ENCODE measurements at regions of chr17 and their contacts with region 1.

Region 1: GRCh38 chr17:31388770-31389661 is 2.5 kb upstream of the RAB11FIP4 start:
- DNase-seq: peak; percentile 83
- H3K4me3 ChIP-seq: no peak overlapping the region; a peak in 1 of 4 replicates
- H3K27ac ChIP-seq: no peak overlapping the region
- H3K4me1 ChIP-seq: peaks cover 0 to 29% of the 10 kb centered on the region in 2 experiments; a peak in 2 of 4 replicates
- H3K27me3 ChIP-seq: no peaks in the 10 kb centered on the region
- CTCF ChIP-seq: peak; percentile 74
- EP300 ChIP-seq: no peak
- RAD21 ChIP-seq: peak; percentile 77

Region 2: DNA sequence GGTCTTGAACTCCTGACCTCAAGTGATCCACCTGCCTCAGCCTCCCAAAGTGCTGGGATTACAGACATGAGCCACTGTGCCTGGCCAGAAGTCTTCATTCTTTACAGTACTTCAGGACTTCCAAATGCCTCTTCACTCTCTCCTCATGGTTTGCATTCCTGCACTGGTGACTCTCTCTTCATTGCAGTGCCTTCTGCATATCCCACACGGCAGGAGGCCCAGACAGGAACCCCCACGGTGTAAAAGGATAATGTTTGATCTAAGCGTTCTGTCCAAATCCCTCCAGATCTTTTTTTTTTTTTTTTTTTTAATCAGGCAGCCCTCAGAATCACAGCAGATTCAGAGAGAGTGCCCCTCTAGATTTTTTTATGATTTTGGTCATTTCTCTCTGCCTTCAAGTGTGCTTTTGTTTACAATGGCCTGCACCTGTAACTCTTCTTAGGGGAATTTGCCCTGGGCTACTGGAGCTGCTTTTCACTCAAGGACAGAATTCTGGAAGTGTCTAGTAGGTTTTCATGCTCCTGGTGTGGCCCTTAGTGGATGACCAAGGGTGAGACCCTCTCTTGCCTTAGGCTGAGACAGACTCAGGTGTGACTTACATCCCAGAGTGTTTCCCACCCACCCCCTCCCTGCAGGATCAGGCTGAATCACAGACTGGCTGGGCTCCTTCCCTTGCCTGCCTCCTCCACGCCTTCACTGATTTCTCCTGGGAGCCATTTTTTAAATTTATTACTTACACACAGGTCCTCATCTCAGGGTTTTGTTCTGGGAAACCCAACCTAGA is 314.1 kb before region 1 on chr17:
- CTCF ChIA-PET with region 1: no interaction called
- POLR2A ChIA-PET with region 1: no interaction called
- DNase-seq: no peak
- H3K4me3 ChIP-seq: no peak overlapping the region
- H3K27ac ChIP-seq: no peak overlapping the region
- H3K4me1 ChIP-seq: no peaks in the 10 kb centered on the region
- H3K27me3 ChIP-seq: no peaks in the 10 kb centered on the region
- CTCF ChIP-seq: no peak
- EP300 ChIP-seq: no peak
- RAD21 ChIP-seq: no peak

Region 3: GRCh38 chr17:31294820-31295488 is 94.1 kb before region 1 on chr17:
- CTCF ChIA-PET with region 1: no interaction called
- POLR2A ChIA-PET with region 1: no interaction called
- DNase-seq: no peak
- H3K4me3 ChIP-seq: no peak overlapping the region
- H3K27ac ChIP-seq: no peak overlapping the region
- H3K4me1 ChIP-seq: no peaks in the 10 kb centered on the region; a peak in 1 of 4 replicates
- H3K27me3 ChIP-seq: no peaks in the 10 kb centered on the region
- CTCF ChIP-seq: no peak
- EP300 ChIP-seq: no peak
- RAD21 ChIP-seq: no peak

Region 4: DNA sequence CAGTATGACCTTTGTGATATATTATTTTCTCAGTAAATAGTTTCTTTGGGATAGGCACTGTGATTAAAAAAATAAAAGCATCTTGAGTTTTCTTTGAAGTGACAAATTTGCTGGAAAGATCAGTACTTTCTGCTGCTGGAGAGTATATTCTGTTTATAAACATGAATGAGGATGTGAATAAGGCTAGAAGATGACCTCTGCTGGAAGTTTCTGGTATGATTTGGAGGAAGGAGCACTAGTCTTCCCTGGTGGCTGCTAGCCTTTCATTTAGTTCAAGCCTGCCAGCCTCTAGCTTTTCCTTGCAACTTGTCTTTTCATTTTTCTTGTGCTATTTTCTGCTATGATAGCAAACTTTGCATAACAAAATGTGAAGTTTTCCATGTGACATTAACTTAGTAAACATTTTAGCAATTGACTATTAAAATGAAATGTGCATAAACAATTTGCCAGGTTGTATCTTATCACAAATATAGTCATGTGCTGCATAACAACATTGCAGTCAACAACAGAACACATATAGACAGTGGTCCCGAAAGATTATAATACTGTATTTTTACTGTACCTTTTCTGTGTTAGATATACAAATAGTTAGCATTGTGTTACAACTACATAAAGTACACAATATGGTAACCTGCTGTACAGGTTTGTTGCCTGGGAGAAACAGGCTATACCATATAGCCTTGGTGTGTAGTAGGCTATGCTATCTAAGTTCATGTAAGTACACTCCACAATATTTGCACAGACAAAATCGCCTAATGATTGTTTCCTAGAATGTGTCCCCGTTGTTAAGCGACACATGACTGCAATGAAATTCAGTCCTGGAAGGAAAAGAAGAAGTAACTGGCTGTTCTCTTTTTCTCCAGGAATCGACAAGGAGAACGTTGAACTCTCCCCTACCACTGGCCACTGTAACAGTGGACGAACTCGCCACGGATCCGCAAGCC is 15.6 kb before region 1 on chr17:
- CTCF ChIA-PET with region 1: interaction called, 26 read pairs
- POLR2A ChIA-PET with region 1: no interaction called
- DNase-seq: no peak
- H3K4me3 ChIP-seq: no peak overlapping the region
- H3K27ac ChIP-seq: 0 out of 4 replicates have a peak overlapping the region, but pooled peaks of 1 of the 2 experiments have one; percentile 18
- H3K4me1 ChIP-seq: peaks cover 3 to 9% of the 10 kb centered on the region in 2 experiments; a peak in 2 of 4 replicates
- H3K27me3 ChIP-seq: no peaks in the 10 kb centered on the region
- CTCF ChIP-seq: peak; percentile 70
- EP300 ChIP-seq: no peak
- RAD21 ChIP-seq: peak; percentile 75

Region 5: DNA sequence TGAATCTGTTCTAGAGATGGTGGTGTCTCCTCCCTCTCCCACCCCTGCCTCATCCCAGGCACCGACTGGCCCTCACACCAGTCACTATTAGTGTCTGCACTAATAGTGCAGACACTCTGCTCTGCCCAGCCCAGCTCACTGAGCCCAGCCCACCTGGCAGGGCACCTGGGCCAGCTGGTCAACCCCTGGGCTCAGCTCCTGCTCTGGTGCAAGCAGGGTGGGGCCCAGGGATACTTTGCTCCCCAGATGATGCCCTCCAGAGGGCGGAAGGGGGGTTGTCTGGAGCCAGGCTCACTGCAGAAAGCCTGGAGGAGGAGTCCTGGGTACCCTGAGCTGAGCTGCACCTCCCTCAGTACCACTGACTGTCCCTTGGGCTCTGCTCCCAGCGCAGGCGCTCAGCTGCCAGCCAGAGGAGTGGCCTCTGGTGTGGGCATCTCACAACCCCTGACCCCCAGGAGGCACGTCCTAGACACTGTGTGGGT is 16.9 kb after region 1 on chr17:
- CTCF ChIA-PET with region 1: interaction called, 18 read pairs
- POLR2A ChIA-PET with region 1: interaction called, 4 read pairs
- DNase-seq: peak; percentile 76
- H3K4me3 ChIP-seq: no peak overlapping the region
- H3K27ac ChIP-seq: peak overlapping the region in 1 of 2 experiments; percentile 92; a peak in 2 of 4 replicates
- H3K4me1 ChIP-seq: peaks cover 0 to 38% of the 10 kb centered on the region in 2 experiments; a peak in 2 of 4 replicates
- H3K27me3 ChIP-seq: no peaks in the 10 kb centered on the region
- CTCF ChIP-seq: no peak
- EP300 ChIP-seq: no peak
- RAD21 ChIP-seq: no peak

Region 6: GRCh38 chr17:31425282-31426040 is 36.4 kb after region 1 on chr17:
- CTCF ChIA-PET with region 1: interaction called, 35 read pairs
- POLR2A ChIA-PET with region 1: interaction called, 7 read pairs
- DNase-seq: peak; percentile 83
- H3K4me3 ChIP-seq: no peak overlapping the region
- H3K27ac ChIP-seq: peak overlapping the region in 1 of 2 experiments; percentile 96; a peak in 2 of 4 replicates
- H3K4me1 ChIP-seq: peaks cover 0 to 28% of the 10 kb centered on the region in 2 experiments; a peak in 2 of 4 replicates
- H3K27me3 ChIP-seq: no peaks in the 10 kb centered on the region
- CTCF ChIP-seq: no peak
- EP300 ChIP-seq: peak in 1 of 2 experiments; percentile 96; a peak in 2 of 4 replicates
- RAD21 ChIP-seq: peak; percentile 30

Region 7: DNA sequence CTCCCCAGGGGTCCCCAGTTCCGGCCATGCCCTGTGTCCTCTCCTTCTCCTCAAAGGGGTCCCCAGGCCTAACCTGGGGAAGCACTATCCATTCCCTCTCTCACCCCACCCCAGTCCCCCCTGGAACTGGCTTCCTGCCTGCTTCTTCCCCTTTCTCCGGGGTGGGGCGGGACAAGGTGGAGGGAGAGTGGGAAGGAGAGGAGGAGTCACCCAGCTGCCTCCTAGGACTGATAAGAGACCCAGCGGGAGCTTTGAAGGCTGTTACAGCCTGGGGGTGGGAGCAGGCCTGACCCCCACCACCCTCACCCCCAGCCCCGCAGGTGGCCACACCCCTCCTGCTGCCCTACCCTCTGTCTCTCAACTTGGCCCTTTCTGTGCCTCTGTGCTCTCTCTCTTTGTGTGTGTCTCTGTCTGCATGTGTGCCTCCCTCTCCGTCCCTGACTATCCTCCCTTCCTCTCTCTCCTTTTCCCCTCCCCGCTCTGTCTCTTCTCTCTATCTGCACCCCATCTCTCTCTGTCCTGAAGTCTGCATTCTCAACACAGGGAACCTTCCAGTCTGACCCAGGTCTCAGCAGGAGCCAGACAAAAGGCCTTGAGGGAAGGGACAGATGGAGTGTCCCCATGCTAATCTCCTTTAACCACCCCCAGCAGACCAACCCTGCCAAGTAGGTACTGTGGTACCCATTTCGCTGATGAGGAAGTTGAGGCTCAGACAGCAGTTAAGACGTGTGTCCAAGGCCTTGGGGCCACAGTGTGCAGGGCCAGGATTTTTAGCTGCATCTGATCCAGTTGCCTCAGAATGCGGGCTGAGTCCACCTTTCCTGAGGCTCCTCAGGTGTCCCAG is 68.6 kb after region 1 on chr17:
- CTCF ChIA-PET with region 1: interaction called, 10 read pairs
- POLR2A ChIA-PET with region 1: no interaction called
- DNase-seq: no peak
- H3K4me3 ChIP-seq: no peak overlapping the region
- H3K27ac ChIP-seq: no peak overlapping the region
- H3K4me1 ChIP-seq: no peaks in the 10 kb centered on the region; a peak in 1 of 4 replicates
- H3K27me3 ChIP-seq: no peaks in the 10 kb centered on the region
- CTCF ChIP-seq: no peak
- EP300 ChIP-seq: no peak
- RAD21 ChIP-seq: no peak

Region 8: GRCh38 chr17:31524926-31525800 is 136.1 kb after region 1 on chr17:
- CTCF ChIA-PET with region 1: interaction called, 127 read pairs
- POLR2A ChIA-PET with region 1: no interaction called
- DNase-seq: peak; percentile 91
- H3K4me3 ChIP-seq: no peak overlapping the region; a peak in 1 of 4 replicates
- H3K27ac ChIP-seq: 0 out of 4 replicates have a peak overlapping the region, but pooled peaks of 1 of the 2 experiments have one; percentile 18
- H3K4me1 ChIP-seq: peaks cover 3 to 12% of the 10 kb centered on the region in 2 experiments; a peak in 1 of 4 replicates
- H3K27me3 ChIP-seq: no peaks in the 10 kb centered on the region
- CTCF ChIP-seq: peak; percentile 89
- EP300 ChIP-seq: no peak
- RAD21 ChIP-seq: peak; percentile 93

Measured in SK-N-SH (cell line).